MCF 10A (cell line): ENCODE measurements at regions of chr11 and their contacts with region 1.

Region 1: GRCh38 chr11:33808228-33808828 is 34.0 kb upstream of the FBXO3 start:
- DNase-seq: peak; percentile 81
- H3K4me3 Mint-ChIP-seq: no peak overlapping the region
- H3K27ac Mint-ChIP-seq: no peak overlapping the region
- H3K4me1 Mint-ChIP-seq: no peaks in the 10 kb centered on the region
- H3K27me3 Mint-ChIP-seq: peaks cover 13% of the 10 kb centered on the region
- CTCF ChIP-seq: peak; percentile 85

Region 2: GRCh38 chr11:32987851-32988250 is 820.5 kb before region 1 on chr11:
- CTCF ChIA-PET with region 1: no interaction called
- POLR2A ChIA-PET with region 1: no interaction called
- intact Hi-C with region 1: no loop called
- DNase-seq: no peak
- H3K4me3 Mint-ChIP-seq: no peak overlapping the region
- H3K27ac Mint-ChIP-seq: no peak overlapping the region
- H3K4me1 Mint-ChIP-seq: no peaks in the 10 kb centered on the region
- H3K27me3 Mint-ChIP-seq: no peaks in the 10 kb centered on the region
- CTCF ChIP-seq: no peak

Region 3: GRCh38 chr11:33773987-33774735 is 34.2 kb before region 1 on chr11 and contains the start of gene FBXO3:
- CTCF ChIA-PET with region 1: interaction called, 17 read pairs
- POLR2A ChIA-PET with region 1: interaction called, 11 read pairs
- intact Hi-C with region 1: no loop called
- DNase-seq: peak; percentile 85
- H3K4me3 Mint-ChIP-seq: peak within 1 kb of the TSS; percentile 88
- H3K27ac Mint-ChIP-seq: peak within 1 kb of the TSS; percentile 93
- H3K4me1 Mint-ChIP-seq: peaks cover 25% of the 10 kb centered on the region
- H3K27me3 Mint-ChIP-seq: no peaks in the 10 kb centered on the region
- CTCF ChIP-seq: no peak
- total RNA-seq, gene FBXO3: 20.1 and 22.7 TPM in 2 replicates

Region 4: DNA sequence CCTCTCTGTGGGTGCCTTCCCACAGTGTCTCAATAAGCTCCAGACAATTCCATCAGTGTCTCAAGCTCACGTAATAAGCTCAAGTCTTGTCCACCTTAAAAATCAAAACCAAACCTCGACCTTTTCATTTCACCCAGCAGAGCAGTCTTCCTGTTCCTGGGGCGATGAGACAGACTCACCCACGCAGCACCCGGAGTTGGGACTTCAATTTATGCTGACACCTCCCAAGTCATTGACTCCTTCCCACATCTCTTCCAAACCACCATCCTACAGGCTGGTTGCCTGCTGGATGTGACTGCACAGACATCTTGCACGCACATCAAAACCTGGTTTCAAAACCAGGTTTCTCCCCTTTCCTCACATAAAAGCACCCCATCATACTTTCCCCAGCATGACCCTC is 10.9 kb after region 1 on chr11:
- CTCF ChIA-PET with region 1: interaction called, 202 read pairs
- POLR2A ChIA-PET with region 1: interaction called, 4 read pairs
- intact Hi-C with region 1: no loop called
- DNase-seq: no peak
- H3K4me3 Mint-ChIP-seq: no peak overlapping the region
- H3K27ac Mint-ChIP-seq: no peak overlapping the region
- H3K4me1 Mint-ChIP-seq: no peaks in the 10 kb centered on the region
- H3K27me3 Mint-ChIP-seq: peaks cover 21% of the 10 kb centered on the region
- CTCF ChIP-seq: no peak

Region 5: DNA sequence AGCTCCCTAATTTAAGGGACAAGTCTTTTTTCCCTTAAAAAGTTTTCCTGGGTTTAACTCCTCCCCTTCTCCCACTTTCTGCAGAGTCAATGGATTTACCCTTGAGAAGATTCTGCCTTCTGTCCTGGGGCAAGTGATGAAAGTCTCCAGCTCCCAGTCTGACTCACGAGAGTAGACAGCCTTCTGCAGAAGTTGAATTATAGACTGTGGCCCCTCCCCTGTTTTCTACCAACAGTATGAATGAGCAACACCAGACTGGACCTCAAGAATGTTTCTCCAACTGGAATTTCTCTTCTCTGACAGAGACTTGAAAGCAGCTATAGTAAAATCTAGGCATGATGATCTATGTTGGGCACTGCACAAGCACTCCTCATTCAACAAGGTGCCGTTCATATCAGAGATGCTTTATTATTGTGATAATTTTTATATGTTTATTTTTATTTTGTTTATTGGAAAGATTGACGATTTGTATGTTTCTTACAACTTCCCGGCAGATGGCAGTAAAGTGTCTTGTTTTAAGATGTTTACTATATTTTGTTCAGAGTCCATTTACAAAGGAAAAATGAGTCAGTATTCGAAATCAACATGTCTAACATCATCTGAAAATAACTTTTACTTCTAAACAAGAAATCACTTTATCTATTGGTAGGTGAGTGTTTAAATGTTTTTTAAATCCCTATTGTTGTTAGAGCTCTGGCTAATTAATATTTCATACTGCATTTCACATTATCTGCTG is 27.0 kb after region 1 on chr11:
- CTCF ChIA-PET with region 1: interaction called, 202 read pairs
- POLR2A ChIA-PET with region 1: interaction called, 6 read pairs
- intact Hi-C with region 1: no loop called
- DNase-seq: peak; percentile 59
- H3K4me3 Mint-ChIP-seq: no peak overlapping the region
- H3K27ac Mint-ChIP-seq: no peak overlapping the region
- H3K4me1 Mint-ChIP-seq: peaks cover 12% of the 10 kb centered on the region
- H3K27me3 Mint-ChIP-seq: peaks cover 20% of the 10 kb centered on the region
- CTCF ChIP-seq: peak; percentile 45

Region 6: DNA sequence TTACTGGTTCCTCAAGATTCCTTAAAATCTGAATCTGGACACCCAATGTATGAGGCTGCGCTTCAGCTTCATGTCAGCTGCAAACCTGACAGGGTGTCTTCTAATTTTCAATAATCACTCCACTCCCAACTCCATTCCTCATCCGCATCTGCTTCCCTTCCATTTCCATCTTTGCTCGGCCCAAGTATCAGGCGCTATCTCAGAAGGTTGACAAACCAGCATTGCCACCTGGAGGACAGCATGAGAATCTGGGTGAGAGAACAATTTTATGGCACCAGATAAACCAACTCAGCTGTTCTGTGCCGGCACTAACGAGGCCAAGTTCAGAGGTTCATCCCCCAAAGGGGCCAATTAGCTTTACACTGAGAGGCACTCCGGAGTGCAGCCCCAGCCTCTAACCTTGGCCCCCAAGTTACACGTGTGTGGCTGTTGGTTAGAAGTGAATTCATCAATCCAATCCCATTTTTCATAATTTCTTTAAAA is 162.7 kb after region 1 on chr11:
- CTCF ChIA-PET with region 1: interaction called, 16 read pairs
- POLR2A ChIA-PET with region 1: no interaction called
- intact Hi-C with region 1: loop called (anchors 1 kb)
- DNase-seq: peak; percentile 66
- H3K4me3 Mint-ChIP-seq: no peak overlapping the region
- H3K27ac Mint-ChIP-seq: no peak overlapping the region
- H3K4me1 Mint-ChIP-seq: no peaks in the 10 kb centered on the region
- H3K27me3 Mint-ChIP-seq: no peaks in the 10 kb centered on the region
- CTCF ChIP-seq: peak; percentile 55